ENCODE measurements at regions of chrX and their contacts with region 1.

Region 1: DNA sequence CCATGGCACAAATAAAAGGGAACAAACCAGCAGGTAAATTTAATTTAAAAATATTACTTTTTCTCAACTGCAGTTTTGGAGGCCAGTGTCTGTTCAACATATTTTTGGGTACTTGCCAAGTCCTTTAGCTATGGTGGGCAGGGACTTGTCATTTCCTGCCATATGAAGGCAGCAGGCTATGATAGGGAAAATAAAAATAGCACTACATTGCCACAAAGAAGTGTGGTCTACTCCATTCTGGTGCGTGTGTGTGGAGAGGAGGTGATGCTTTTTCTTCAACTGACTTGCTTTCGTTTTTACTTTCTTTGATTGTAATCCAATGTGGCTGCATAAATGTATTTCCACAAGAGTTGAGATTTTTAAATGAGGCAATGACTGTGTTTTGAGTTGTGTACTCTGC is 17.2 kb downstream of the GPR174 start:
- DNase-seq: peak; percentile 50
- H3K4me3 Mint-ChIP-seq: peak overlapping the region; percentile 81
- H3K27ac Mint-ChIP-seq: peak overlapping the region; percentile 98
- H3K4me1 Mint-ChIP-seq: peaks cover 55% of the 10 kb centered on the region
- H3K27me3 Mint-ChIP-seq: no peaks in the 10 kb centered on the region

Region 2: DNA sequence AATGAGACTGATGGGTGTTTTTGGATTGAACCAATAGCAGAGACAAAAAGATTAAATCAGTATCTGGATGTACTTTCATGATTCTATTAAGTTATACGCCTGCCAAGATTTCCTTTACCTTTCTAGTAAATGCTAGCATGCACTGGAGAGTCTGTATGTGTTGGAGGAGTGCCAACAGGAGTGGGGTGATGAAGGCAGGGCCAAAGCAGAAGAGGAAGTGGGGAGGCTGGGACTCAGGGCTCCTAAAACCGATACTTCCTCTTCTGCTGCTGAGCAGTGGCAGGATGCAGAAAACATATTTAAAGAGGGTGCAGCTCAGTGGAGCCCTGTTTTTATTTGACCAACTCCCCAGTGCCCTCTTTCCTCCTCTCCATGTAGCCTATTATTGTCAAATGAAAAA is 839.8 kb before region 1 on chrX:
- CTCF ChIA-PET with region 1: no interaction called
- POLR2A ChIA-PET with region 1: no interaction called
- intact Hi-C with region 1: loop called (anchors 10 kb)
- DNase-seq: peak; percentile 64
- H3K4me3 Mint-ChIP-seq: peak overlapping the region; percentile 45
- H3K27ac Mint-ChIP-seq: peak overlapping the region; percentile 81
- H3K4me1 Mint-ChIP-seq: peaks cover 32% of the 10 kb centered on the region
- H3K27me3 Mint-ChIP-seq: no peaks in the 10 kb centered on the region

Region 3: GRCh38 chrX:79089896-79090584 is 71.6 kb before region 1 on chrX:
- CTCF ChIA-PET with region 1: no interaction called
- POLR2A ChIA-PET with region 1: no interaction called
- intact Hi-C with region 1: no loop called
- DNase-seq: no peak
- H3K4me3 Mint-ChIP-seq: no peak overlapping the region
- H3K27ac Mint-ChIP-seq: peak overlapping the region; percentile 50
- H3K4me1 Mint-ChIP-seq: peaks cover 58% of the 10 kb centered on the region
- H3K27me3 Mint-ChIP-seq: no peaks in the 10 kb centered on the region

Measured in activated CD4-positive, alpha-beta memory T cell treated with anti-CD3 and anti-CD28 coated beads for 36 hours (primary cell).